ENCODE measurements at regions of chr2 and their contacts with region 1.

Region 1: GRCh38 chr2:102615622-102616436 is 3.5 kb upstream of the SLC9A2 start:
- DNase-seq: peak; percentile 72
- H3K4me3 Mint-ChIP-seq: no peak overlapping the region
- H3K27ac Mint-ChIP-seq: no peak overlapping the region
- H3K4me1 Mint-ChIP-seq: no peaks in the 10 kb centered on the region
- H3K27me3 Mint-ChIP-seq: peaks cover 46% of the 10 kb centered on the region
- CTCF ChIP-seq: peak; percentile 93

Region 2: GRCh38 chr2:102449370-102449974 is 166.4 kb before region 1 on chr2:
- CTCF ChIA-PET with region 1: no interaction called
- POLR2A ChIA-PET with region 1: no interaction called
- intact Hi-C with region 1: no loop called
- DNase-seq: peak; percentile 49
- H3K4me3 Mint-ChIP-seq: no peak overlapping the region
- H3K27ac Mint-ChIP-seq: no peak overlapping the region
- H3K4me1 Mint-ChIP-seq: no peaks in the 10 kb centered on the region
- H3K27me3 Mint-ChIP-seq: no peaks in the 10 kb centered on the region
- CTCF ChIP-seq: peak; percentile 64

Region 3: DNA sequence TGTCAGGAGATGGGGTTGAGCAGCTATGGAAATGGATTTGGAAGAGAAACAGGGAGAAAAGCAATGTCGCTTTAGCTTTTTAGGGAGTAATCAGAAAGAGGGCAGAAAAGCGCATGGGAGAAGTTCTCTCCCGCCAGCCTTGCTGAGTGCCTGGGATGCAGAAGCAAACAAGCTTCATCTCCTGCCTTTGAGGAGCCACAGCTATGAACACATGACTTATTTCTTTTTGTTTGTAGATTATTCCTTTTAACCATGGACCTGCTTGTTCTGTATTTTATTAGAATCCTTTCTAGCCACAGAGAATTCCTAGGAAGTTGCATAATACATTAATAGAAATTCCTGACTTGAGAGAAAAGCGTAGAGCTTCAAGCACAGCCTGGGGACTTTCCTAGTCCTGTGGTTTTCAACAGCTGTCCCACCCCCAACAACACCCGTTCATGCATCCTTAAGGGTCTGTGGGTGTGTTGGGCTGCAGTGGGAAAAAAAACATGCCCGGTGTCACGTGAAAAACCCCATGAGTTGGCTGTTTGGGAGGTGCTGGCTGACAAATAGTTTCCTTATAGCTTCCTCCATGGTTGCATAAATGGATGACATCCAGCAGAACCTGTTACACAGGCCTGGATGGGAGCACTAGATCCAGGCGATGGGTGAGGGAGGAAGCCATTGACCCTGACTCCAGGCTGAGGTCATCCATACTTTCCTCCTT is 127.9 kb before region 1 on chr2:
- CTCF ChIA-PET with region 1: interaction called, 14 read pairs
- POLR2A ChIA-PET with region 1: no interaction called
- intact Hi-C with region 1: no loop called
- DNase-seq: peak; percentile 39
- H3K4me3 Mint-ChIP-seq: no peak overlapping the region
- H3K27ac Mint-ChIP-seq: no peak overlapping the region
- H3K4me1 Mint-ChIP-seq: peaks cover 6% of the 10 kb centered on the region
- H3K27me3 Mint-ChIP-seq: no peaks in the 10 kb centered on the region
- CTCF ChIP-seq: no peak

Region 4: DNA sequence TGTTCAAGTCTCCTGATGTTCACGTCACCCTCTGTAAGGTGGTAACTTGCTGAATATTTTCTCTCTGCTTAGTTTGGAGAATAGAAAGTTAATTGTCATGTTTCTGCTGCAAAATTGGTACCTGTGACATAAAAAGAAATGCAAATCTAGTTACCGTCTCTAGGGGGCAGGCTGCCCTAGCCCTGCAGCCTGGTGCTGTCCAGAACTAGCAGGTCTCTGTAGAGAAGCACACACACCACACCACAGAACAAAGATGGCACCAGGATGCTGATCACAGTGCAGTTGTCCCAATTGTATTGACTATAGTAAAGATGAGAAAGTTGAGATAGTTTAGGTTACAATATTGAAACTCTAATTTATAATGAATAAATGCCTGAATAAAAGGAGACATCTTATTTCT is 95.8 kb before region 1 on chr2:
- CTCF ChIA-PET with region 1: interaction called, 53 read pairs
- POLR2A ChIA-PET with region 1: no interaction called
- intact Hi-C with region 1: loop called (anchors 1 kb)
- DNase-seq: peak; percentile 54
- H3K4me3 Mint-ChIP-seq: no peak overlapping the region
- H3K27ac Mint-ChIP-seq: no peak overlapping the region
- H3K4me1 Mint-ChIP-seq: peaks cover 1% of the 10 kb centered on the region
- H3K27me3 Mint-ChIP-seq: no peaks in the 10 kb centered on the region
- CTCF ChIP-seq: peak; percentile 64

Region 5: DNA sequence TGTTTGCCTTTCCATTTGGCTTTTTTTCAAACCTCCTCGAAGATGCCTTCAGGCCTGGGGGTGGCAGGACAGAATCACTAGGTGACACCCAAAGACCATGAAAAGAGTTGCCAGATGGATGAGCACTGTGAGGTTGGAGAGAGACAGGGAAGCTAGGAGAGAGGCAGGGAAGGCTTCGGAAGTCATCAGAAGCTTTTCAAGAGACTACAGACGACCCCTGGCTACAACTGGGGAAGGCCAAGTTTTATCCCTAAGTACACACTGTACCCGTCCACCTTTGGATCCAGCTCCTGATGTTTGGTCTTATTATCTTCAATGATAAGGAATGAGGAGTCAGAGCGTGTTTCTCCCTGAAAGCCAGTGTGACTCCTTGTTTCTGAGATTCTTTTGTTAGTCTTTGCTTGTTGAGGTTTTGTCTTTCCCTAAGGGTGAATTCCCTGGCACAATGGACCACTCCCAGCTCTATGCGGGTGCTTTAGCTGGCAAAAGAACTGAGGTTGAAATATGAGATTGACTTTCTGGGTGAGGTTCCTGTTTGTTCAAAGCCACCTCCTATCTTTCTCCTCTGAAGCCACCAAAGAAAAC is 29.9 kb before region 1 on chr2:
- CTCF ChIA-PET with region 1: interaction called, 21 read pairs
- POLR2A ChIA-PET with region 1: no interaction called
- intact Hi-C with region 1: no loop called
- DNase-seq: peak; percentile 57
- H3K4me3 Mint-ChIP-seq: no peak overlapping the region
- H3K27ac Mint-ChIP-seq: no peak overlapping the region
- H3K4me1 Mint-ChIP-seq: peaks cover 9% of the 10 kb centered on the region
- H3K27me3 Mint-ChIP-seq: peaks cover 11% of the 10 kb centered on the region
- CTCF ChIP-seq: no peak

Region 6: GRCh38 chr2:102592597-102592996 is 23.2 kb before region 1 on chr2:
- CTCF ChIA-PET with region 1: interaction called, 10 read pairs
- POLR2A ChIA-PET with region 1: no interaction called
- intact Hi-C with region 1: no loop called
- DNase-seq: peak; percentile 42
- H3K4me3 Mint-ChIP-seq: no peak overlapping the region
- H3K27ac Mint-ChIP-seq: no peak overlapping the region
- H3K4me1 Mint-ChIP-seq: no peaks in the 10 kb centered on the region
- H3K27me3 Mint-ChIP-seq: peaks cover 11% of the 10 kb centered on the region
- CTCF ChIP-seq: peak; percentile 61

Region 7: DNA sequence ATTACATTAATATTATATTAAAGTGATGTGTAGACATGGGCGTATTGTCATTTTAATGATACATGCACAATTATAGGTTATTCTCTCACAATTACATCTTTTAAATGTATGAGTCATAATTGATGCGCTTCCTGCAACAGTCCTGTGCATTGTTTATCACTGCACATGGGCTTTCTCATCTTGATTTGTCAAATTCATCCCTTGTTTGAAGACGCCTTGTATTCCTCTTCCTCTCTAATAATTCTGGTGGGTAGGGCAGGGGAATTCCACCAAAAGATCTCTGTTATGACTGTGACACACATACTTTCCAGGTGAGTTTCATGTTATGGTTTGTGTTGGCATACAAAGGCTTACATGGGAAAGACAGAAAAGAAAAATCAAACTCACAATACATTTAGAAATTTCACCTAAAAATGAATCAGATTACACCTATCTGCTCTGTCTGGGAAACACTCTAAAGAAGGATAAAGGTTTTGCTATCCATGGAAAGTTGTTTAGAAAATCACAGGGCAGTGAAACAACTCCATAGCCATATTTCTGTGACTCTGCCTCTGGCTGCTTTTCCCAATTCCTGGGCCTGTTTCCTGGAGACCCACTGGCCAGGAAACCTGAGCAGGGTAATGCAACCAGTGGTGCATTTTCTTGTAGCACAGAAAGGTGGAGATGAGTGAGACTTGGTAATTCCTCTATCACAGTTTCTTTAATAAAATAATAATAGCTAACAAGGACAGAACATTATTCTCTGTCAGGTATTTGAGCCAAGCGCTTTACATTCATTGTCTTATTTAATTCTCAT is 16.7 kb after region 1 on chr2:
- CTCF ChIA-PET with region 1: interaction called, 13 read pairs
- POLR2A ChIA-PET with region 1: interaction called, 3 read pairs
- intact Hi-C with region 1: no loop called
- DNase-seq: no peak
- H3K4me3 Mint-ChIP-seq: no peak overlapping the region
- H3K27ac Mint-ChIP-seq: peak overlapping the region; percentile 25
- H3K4me1 Mint-ChIP-seq: peaks cover 7% of the 10 kb centered on the region
- H3K27me3 Mint-ChIP-seq: no peaks in the 10 kb centered on the region
- CTCF ChIP-seq: no peak

Region 8: DNA sequence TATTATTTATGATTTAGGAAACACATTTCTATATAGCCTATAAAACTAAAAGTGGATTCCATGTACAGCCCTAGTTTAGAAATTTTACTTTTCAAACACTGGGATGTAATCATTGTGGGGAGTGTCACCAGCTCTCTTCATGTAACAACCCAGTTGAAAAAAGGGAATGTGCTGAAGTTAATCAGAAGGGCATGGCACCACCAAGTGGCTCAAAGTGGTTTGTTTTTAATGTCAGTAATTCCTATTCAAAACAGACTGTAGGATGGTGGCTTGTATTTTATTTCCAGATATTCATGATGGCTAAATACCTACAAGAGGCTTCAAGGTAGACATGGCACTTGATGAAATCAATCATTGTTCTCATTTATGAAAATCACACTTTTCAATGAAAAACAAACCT is 87.9 kb after region 1 on chr2:
- CTCF ChIA-PET with region 1: interaction called, 47 read pairs
- POLR2A ChIA-PET with region 1: no interaction called
- intact Hi-C with region 1: loop called (anchors 1 kb)
- DNase-seq: peak; percentile 35
- H3K4me3 Mint-ChIP-seq: no peak overlapping the region
- H3K27ac Mint-ChIP-seq: no peak overlapping the region
- H3K4me1 Mint-ChIP-seq: peaks cover under 1% of the 10 kb centered on the region
- H3K27me3 Mint-ChIP-seq: no peaks in the 10 kb centered on the region
- CTCF ChIP-seq: peak; percentile 53

Region 9: GRCh38 chr2:103028181-103028580 is 412.4 kb after region 1 on chr2:
- CTCF ChIA-PET with region 1: no interaction called
- POLR2A ChIA-PET with region 1: no interaction called
- intact Hi-C with region 1: no loop called
- DNase-seq: no peak
- H3K4me3 Mint-ChIP-seq: no peak overlapping the region
- H3K27ac Mint-ChIP-seq: no peak overlapping the region
- H3K4me1 Mint-ChIP-seq: no peaks in the 10 kb centered on the region
- H3K27me3 Mint-ChIP-seq: peaks cover 69% of the 10 kb centered on the region
- CTCF ChIP-seq: no peak

Measured in MCF 10A (cell line).